CD8-positive, alpha-beta memory T cell (primary cell): ENCODE measurements at regions of chr2 and their contacts with region 1.

Region 1: GRCh38 chr2:70861777-70862625 is 26.4 kb upstream of the CD207 start:
- DNase-seq: peak; percentile 34 to 68 (median 59)
- H3K4me3 ChIP-seq: no peak overlapping the region
- H3K4me3 Mint-ChIP-seq: no peak overlapping the region
- H3K27ac ChIP-seq: no peak overlapping the region
- H3K27ac Mint-ChIP-seq: peak overlapping the region in 1 of 8 donors; percentile 48
- H3K4me1 ChIP-seq: no peaks in the 10 kb centered on the region
- H3K4me1 Mint-ChIP-seq: peaks cover 2 to 5% (median 4%) of the 10 kb centered on the region in 3 donors
- H3K27me3 ChIP-seq: peaks cover 13% of the 10 kb centered on the region
- H3K27me3 Mint-ChIP-seq: peaks cover 19 to 43% of the 10 kb centered on the region in 2 donors

Region 2: DNA sequence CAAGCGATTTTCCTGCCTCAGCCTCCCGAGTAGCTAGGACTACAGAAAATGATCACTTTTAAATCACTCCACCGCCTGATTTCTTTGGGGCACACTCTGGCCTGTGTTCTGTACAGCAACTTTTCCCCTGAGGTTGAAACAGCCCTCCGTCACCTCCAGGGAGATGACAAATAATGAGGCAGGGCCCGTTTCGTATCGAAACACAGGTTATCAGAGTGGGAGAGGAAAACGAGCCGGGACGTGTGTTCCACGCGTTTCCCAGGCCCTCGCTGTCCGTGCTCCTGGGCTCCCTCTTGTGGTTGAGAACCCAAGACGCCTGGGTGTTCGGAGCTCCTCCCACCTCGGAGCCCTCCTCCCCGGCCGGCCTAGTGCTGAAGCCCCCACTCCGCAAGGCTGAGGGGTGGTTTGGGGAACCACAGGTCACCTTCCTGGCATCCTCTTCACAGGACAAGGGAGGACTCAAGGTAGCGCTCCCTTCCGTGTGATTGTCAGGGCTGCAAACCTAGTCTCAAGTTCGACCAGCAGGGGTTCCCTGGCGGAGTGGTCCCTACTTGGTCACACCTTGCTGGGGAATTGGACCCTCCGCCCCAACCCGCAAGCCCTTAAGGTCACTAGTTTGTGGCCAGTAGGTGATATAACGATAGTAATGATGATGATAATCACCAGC is 86.5 kb after region 1 on chr2:
- CTCF ChIA-PET with region 1: interaction called, 12 read pairs
- POLR2A ChIA-PET with region 1: no interaction called
- DNase-seq: peak; percentile 56 to 78 (median 68)
- H3K4me3 ChIP-seq: peak overlapping the region; percentile 40
- H3K4me3 Mint-ChIP-seq: peak overlapping the region; percentile 53 to 89 (median 84)
- H3K27ac ChIP-seq: no peak overlapping the region
- H3K27ac Mint-ChIP-seq: peak overlapping the region in 6 of 8 donors; percentile 12 to 89 (median 73)
- H3K4me1 ChIP-seq: peaks cover 13% of the 10 kb centered on the region
- H3K4me1 Mint-ChIP-seq: peaks cover 14 to 17% (median 17%) of the 10 kb centered on the region in 3 donors
- H3K27me3 ChIP-seq: no peaks in the 10 kb centered on the region
- H3K27me3 Mint-ChIP-seq: peaks cover 16 to 31% of the 10 kb centered on the region in 2 donors

Region 3: GRCh38 chr2:70964596-70965386 is 102.8 kb after region 1 on chr2:
- CTCF ChIA-PET with region 1: no interaction called
- POLR2A ChIA-PET with region 1: no interaction called
- DNase-seq: peak; percentile 75 to 84 (median 76)
- H3K4me3 ChIP-seq: peak overlapping the region; percentile 72
- H3K4me3 Mint-ChIP-seq: peak overlapping the region; percentile 69 to 90 (median 85)
- H3K27ac ChIP-seq: no peak overlapping the region
- H3K27ac Mint-ChIP-seq: peak overlapping the region in 5 of 8 donors; percentile 27 to 87 (median 60)
- H3K4me1 ChIP-seq: peaks cover 6% of the 10 kb centered on the region
- H3K4me1 Mint-ChIP-seq: peaks cover 5 to 8% (median 8%) of the 10 kb centered on the region in 3 donors
- H3K27me3 ChIP-seq: peaks cover 5% of the 10 kb centered on the region
- H3K27me3 Mint-ChIP-seq: peaks cover 15 to 29% of the 10 kb centered on the region in 2 donors